ENCODE measurements at regions of chr3 and their contacts with region 1.

Region 1: DNA sequence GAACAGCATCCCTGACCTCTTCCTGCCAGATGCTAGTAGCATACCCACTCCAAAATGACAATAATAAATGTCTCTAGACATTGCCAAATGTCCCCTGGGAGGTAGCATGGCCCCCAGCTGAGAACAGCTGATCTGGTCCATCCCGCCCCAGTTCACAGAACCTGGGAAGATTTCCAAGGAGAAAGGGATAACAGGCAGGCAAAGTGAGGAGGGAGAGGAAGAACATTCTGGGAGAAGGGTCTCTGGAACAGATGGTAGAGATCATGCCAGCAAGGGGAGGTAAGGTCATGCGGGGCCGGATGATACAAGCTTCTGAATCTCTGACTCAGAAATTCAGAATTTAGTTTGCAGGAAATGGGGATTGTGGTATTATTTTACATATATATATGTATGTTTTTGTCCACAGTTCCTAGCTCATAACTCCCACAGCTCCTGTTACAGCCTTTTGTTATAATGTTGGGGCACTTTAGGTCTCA is 192.7 kb downstream of the SUCLG2 start:
- DNase-seq: no peak
- ATAC-seq: no peak
- H3K4me3 ChIP-seq: no peak overlapping the region
- H3K4me3 Mint-ChIP-seq: no peak overlapping the region
- H3K27ac ChIP-seq: no peak overlapping the region
- H3K27ac Mint-ChIP-seq: no peak overlapping the region
- H3K4me1 ChIP-seq: no peaks in the 10 kb centered on the region
- H3K4me1 Mint-ChIP-seq: peaks cover 5 to 16% (median 12%) of the 10 kb centered on the region in 3 donors
- H3K27me3 ChIP-seq: no peaks in the 10 kb centered on the region
- H3K27me3 Mint-ChIP-seq: no peaks in the 10 kb centered on the region

Region 2: GRCh38 chr3:68373727-68374126 is 912.0 kb after region 1 on chr3:
- CTCF ChIA-PET with region 1: no interaction called
- POLR2A ChIA-PET with region 1: interaction called in 1 of 2 experiments, 12 read pairs
- DNase-seq: no peak
- ATAC-seq: no peak
- H3K4me3 ChIP-seq: no peak overlapping the region
- H3K4me3 Mint-ChIP-seq: no peak overlapping the region
- H3K27ac ChIP-seq: no peak overlapping the region
- H3K27ac Mint-ChIP-seq: no peak overlapping the region
- H3K4me1 ChIP-seq: no peaks in the 10 kb centered on the region
- H3K4me1 Mint-ChIP-seq: no peaks in the 10 kb centered on the region
- H3K27me3 ChIP-seq: no peaks in the 10 kb centered on the region
- H3K27me3 Mint-ChIP-seq: no peaks in the 10 kb centered on the region